Posterior cingulate gyrus (tissue), 11 donors: ENCODE measurements at regions of chr1 and their contacts with region 1.

Region 1: GRCh38 chr1:24635195-24635843 is 7.8 kb upstream of the SRRM1 start:
- DNase-seq: no peak

Region 2: DNA sequence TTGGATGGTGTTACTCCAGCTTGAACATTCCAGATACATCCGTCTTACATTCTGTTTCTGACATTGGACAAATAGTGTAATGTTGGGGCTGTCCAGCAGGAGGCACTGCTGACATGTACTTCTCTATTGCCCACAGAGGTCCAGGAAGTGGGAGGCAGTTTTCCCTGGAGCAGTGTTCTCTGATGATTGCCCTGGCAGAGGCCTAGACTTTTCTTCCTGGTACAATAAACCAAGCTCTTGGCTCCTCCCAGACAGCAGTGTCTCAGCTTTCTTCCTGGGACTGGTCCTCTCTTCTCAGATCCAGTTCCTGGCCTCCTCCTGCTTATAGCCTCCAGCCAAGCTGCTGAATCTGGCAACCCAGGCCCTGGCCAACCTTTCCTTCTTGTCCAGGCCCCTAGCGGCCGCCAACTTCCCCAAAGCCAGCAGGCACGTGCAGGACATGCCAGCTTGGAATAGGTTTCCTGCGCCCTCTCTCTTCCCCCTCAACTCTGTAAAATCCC is 433.3 kb before region 1 on chr1:
- intact Hi-C with region 1: loop called (anchors 1 kb)
- DNase-seq: peak in 9 of 10 donors; percentile 44 to 90 (median 76)

Region 3: GRCh38 chr1:24541711-24542346 is 93.5 kb before region 1 on chr1:
- intact Hi-C with region 1: loop called (anchors 2 kb)
- DNase-seq: peak in 3 of 10 donors; percentile 54 to 87 (median 58)